ENCODE measurements at regions of chr1 and their contacts with region 1.

Region 1: GRCh38 chr1:218957971-218958547 is 215.6 kb upstream of the LYPLAL1 start:
- DNase-seq: no peak
- H3K4me3 ChIP-seq: no peak overlapping the region
- H3K27ac ChIP-seq: no peak overlapping the region
- H3K4me1 ChIP-seq: no peaks in the 10 kb centered on the region
- H3K27me3 ChIP-seq: no peaks in the 10 kb centered on the region
- CTCF ChIP-seq: no peak

Region 2: GRCh38 chr1:218983887-218984286 is 25.8 kb after region 1 on chr1:
- CTCF ChIA-PET with region 1: no interaction called
- POLR2A ChIA-PET with region 1: interaction called, 11 read pairs
- intact Hi-C with region 1: no loop called
- DNase-seq: no peak
- H3K4me3 ChIP-seq: no peak overlapping the region
- H3K27ac ChIP-seq: no peak overlapping the region
- H3K4me1 ChIP-seq: 0 out of 2 replicates have a peak, but pooled peaks cover 7% of the 10 kb centered on the region
- H3K27me3 ChIP-seq: no peaks in the 10 kb centered on the region
- CTCF ChIP-seq: no peak